Naive thymus-derived CD4-positive, alpha-beta T cell (primary cell): ENCODE measurements at regions of chr10 and their contacts with region 1.

Region 1: GRCh38 chr10:6014241-6014761 is 37.0 kb upstream of the IL15RA start:
- DNase-seq: peak in 7 of 9 donors; percentile 73 to 89 (median 86)
- ATAC-seq: peak; percentile 98
- H3K4me3 ChIP-seq: no peak overlapping the region
- H3K4me3 Mint-ChIP-seq: peak overlapping the region in 9 of 10 donors; percentile 5 to 61 (median 36)
- H3K27ac ChIP-seq: peak overlapping the region; percentile 82
- H3K27ac Mint-ChIP-seq: peak overlapping the region; percentile 85 to 99 (median 96)
- H3K4me1 ChIP-seq: peaks cover 9 to 15% of the 10 kb centered on the region in 2 donors
- H3K4me1 Mint-ChIP-seq: peaks cover 3 to 55% (median 25%) of the 10 kb centered on the region in 7 donors
- H3K27me3 ChIP-seq: no peaks in the 10 kb centered on the region
- H3K27me3 Mint-ChIP-seq: no peaks in the 10 kb centered on the region

Region 2: GRCh38 chr10:6033954-6034353 is 19.7 kb after region 1 on chr10:
- CTCF ChIA-PET with region 1: interaction called, 17 read pairs
- POLR2A ChIA-PET with region 1: interaction called, 7 read pairs
- intact Hi-C with region 1: loop called in 1 of 2 experiments (anchors 2 kb)
- DNase-seq: no peak
- ATAC-seq: no peak
- H3K4me3 ChIP-seq: no peak overlapping the region
- H3K4me3 Mint-ChIP-seq: no peak overlapping the region
- H3K27ac ChIP-seq: no peak overlapping the region
- H3K27ac Mint-ChIP-seq: peak overlapping the region in 2 of 9 donors; percentile 34 to 48
- H3K4me1 ChIP-seq: peaks cover 26 to 32% of the 10 kb centered on the region in 2 donors
- H3K4me1 Mint-ChIP-seq: peaks cover 29 to 60% (median 40%) of the 10 kb centered on the region in 7 donors
- H3K27me3 ChIP-seq: no peaks in the 10 kb centered on the region
- H3K27me3 Mint-ChIP-seq: no peaks in the 10 kb centered on the region

Region 3: GRCh38 chr10:6062101-6062771 is 47.9 kb after region 1 on chr10 and contains the start of gene IL2RA:
- CTCF ChIA-PET with region 1: interaction called, 24 read pairs
- POLR2A ChIA-PET with region 1: interaction called, 5 read pairs
- intact Hi-C with region 1: loop called (anchors 1 kb)
- DNase-seq: peak in 8 of 9 donors; percentile 57 to 79 (median 74)
- ATAC-seq: peak; percentile 92
- H3K4me3 ChIP-seq: peak within 1 kb of the TSS; percentile 54
- H3K4me3 Mint-ChIP-seq: peak within 1 kb of the TSS; percentile 77 to 91 (median 86)
- H3K27ac ChIP-seq: peak within 1 kb of the TSS; percentile 70
- H3K27ac Mint-ChIP-seq: peak within 1 kb of the TSS; percentile 75 to 94 (median 85)
- H3K4me1 ChIP-seq: peaks cover 16 to 27% of the 10 kb centered on the region in 2 donors
- H3K4me1 Mint-ChIP-seq: peaks cover 43 to 82% (median 71%) of the 10 kb centered on the region in 7 donors
- H3K27me3 ChIP-seq: no peaks in the 10 kb centered on the region
- H3K27me3 Mint-ChIP-seq: no peaks in the 10 kb centered on the region
- total RNA-seq, gene IL2RA: 2.5 to 266 (median 6.7) TPM

Region 4: GRCh38 chr10:6068422-6068821 is 54.1 kb after region 1 on chr10:
- CTCF ChIA-PET with region 1: interaction called, 24 read pairs
- POLR2A ChIA-PET with region 1: interaction called, 4 read pairs
- intact Hi-C with region 1: loop called in 1 of 2 experiments (anchors 1 kb)
- DNase-seq: peak in 7 of 9 donors; percentile 65 to 76 (median 69)
- ATAC-seq: peak; percentile 85
- H3K4me3 ChIP-seq: peak overlapping the region; percentile 46
- H3K4me3 Mint-ChIP-seq: peak overlapping the region; percentile 76 to 91 (median 82)
- H3K27ac ChIP-seq: peak overlapping the region; percentile 62
- H3K27ac Mint-ChIP-seq: peak overlapping the region; percentile 16 to 94 (median 90)
- H3K4me1 ChIP-seq: peaks cover 0 to 55% of the 10 kb centered on the region in 2 donors
- H3K4me1 Mint-ChIP-seq: peaks cover 52 to 94% (median 82%) of the 10 kb centered on the region in 7 donors
- H3K27me3 ChIP-seq: no peaks in the 10 kb centered on the region
- H3K27me3 Mint-ChIP-seq: no peaks in the 10 kb centered on the region

Region 5: DNA sequence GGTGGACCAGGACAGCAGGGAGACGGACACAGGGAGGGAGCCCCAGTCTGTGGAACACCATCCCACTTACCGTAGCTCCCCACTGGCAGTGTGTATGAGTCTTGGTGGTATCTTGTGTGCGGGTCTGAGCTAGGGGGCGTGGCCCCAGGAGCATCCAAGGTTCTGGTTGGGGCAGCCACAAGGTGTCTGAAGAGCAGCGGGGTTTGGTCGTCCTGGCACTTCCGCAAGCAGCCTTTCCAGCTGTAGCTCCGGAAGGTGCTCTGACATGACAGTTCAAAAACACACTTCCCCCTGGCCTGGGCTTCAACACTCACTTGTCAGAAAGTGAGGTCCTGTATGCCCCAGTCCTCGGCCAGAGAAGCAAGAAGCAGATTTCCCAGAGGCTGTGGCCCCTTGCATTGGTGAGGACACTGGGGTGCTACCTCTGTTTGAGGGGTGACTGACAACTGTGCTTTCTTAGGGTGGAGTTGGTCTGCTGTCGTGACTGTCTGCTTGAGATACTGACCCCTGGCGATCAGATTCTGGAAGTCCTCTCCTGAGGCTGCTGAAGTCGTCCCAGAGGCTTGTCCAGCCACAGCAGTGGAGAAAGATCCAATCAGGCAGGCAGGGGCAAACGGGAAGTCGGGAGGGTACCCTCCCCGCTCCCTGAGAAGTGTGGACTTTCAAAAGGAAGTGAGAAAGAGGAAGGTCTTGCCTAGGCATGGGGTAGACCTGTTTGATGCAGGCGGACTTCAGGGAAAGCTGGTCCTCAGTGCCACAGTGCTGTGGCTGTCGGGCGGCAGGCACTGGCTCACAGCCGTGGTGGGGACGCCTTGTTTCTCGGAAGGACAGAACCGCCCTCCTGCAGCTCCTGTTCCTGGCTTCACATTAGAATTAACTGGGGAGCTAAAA is 137.0 kb after region 1 on chr10:
- CTCF ChIA-PET with region 1: no interaction called
- POLR2A ChIA-PET with region 1: no interaction called
- intact Hi-C with region 1: loop called in 1 of 2 experiments (anchors 1 kb)
- DNase-seq: peak; percentile 26 to 58 (median 53)
- ATAC-seq: peak; percentile 79
- H3K4me3 ChIP-seq: peak overlapping the region; percentile 28
- H3K4me3 Mint-ChIP-seq: peak overlapping the region; percentile 70 to 85 (median 80)
- H3K27ac ChIP-seq: peak overlapping the region; percentile 25
- H3K27ac Mint-ChIP-seq: peak overlapping the region; percentile 68 to 92 (median 85)
- H3K4me1 ChIP-seq: peaks cover 1 to 32% of the 10 kb centered on the region in 2 donors
- H3K4me1 Mint-ChIP-seq: peaks cover 49 to 68% (median 59%) of the 10 kb centered on the region in 7 donors
- H3K27me3 ChIP-seq: no peaks in the 10 kb centered on the region
- H3K27me3 Mint-ChIP-seq: no peaks in the 10 kb centered on the region

Region 6: DNA sequence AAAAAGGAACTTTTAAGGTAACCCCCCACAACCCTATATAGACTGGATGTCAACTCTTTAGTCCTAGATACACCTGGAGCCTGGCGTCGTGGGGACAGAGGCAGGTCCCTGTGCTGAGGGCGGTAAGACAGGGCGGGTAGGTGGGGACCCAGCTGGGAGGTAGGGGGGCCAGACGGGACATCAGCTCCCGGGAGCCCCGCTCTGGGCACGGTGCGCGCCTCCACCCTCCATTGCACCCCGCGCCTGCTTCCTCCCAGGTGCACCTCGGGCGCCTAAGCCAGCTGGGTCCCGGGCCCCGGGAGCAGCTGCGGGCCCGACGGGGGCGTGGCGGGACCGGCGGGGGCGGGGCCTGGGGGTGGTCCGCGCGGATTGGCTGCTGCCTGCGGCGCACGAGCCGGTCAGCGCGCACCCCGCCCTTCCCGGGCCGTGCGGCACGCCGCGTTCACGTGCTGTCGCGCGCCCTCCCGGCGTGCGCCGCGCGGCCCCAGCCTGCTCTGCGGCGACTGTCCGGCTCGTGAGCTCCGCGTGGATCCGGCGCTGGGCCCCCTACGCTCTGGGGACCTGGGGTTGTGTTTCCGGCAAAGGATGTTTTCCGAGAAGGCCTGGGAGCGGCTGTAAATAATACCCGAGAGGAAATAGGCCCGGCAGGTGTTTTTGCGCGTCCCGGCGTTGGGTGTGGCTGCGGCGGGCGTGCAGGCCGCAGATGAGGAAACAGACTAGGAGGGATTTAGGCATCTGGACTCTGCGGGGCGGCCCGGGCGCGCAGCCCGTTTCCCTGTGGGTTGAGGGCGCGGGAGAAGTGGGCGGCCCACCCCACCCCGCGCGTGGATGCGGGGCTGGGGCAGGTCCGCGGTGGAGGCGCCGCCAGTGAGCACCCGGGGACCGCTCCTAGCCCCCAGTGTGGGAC is 149.3 kb after region 1 on chr10:
- CTCF ChIA-PET with region 1: no interaction called
- POLR2A ChIA-PET with region 1: no interaction called
- intact Hi-C with region 1: no loop called
- DNase-seq: peak; percentile 89 to 95 (median 94)
- ATAC-seq: peak; percentile 96
- H3K4me3 ChIP-seq: peak overlapping the region; percentile 81
- H3K4me3 Mint-ChIP-seq: peak overlapping the region; percentile 85 to 95 (median 92)
- H3K27ac ChIP-seq: peak overlapping the region; percentile 95
- H3K27ac Mint-ChIP-seq: peak overlapping the region; percentile 91 to 99 (median 97)
- H3K4me1 ChIP-seq: peaks cover 25 to 33% of the 10 kb centered on the region in 2 donors
- H3K4me1 Mint-ChIP-seq: peaks cover 30 to 64% (median 57%) of the 10 kb centered on the region in 7 donors
- H3K27me3 ChIP-seq: no peaks in the 10 kb centered on the region
- H3K27me3 Mint-ChIP-seq: no peaks in the 10 kb centered on the region

Region 7: DNA sequence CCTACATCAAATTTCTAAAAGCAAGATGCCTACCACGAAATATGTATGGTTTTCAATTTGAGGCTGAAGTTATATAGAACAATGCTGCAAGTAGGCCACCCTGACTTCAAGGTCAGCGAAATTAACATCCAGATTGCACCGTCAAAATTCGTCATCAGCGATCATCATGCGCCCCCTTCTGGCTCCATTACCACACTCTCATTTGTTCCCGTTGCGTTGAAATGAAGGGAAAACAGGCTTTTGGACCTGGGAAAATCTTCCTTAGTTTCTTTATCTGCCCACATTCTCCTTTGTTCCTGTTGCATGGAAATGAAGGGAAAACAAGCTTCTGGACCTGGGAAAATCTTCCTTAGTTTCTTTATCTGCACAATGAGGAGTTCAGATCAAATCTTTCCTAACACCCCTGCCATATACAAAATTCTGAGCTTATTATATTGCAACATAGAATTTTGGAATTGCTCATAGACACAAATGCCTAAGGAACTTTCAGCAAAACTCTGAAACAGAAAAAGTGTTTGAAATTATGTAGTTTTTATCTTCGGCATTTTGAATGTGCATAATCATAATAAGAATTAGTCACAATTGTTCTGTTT is 664.0 kb after region 1 on chr10:
- CTCF ChIA-PET with region 1: no interaction called
- POLR2A ChIA-PET with region 1: no interaction called
- intact Hi-C with region 1: loop called in 1 of 2 experiments (anchors 1 kb)
- DNase-seq: peak in 8 of 9 donors; percentile 24 to 55 (median 48)
- ATAC-seq: peak; percentile 56
- H3K4me3 ChIP-seq: no peak overlapping the region
- H3K4me3 Mint-ChIP-seq: no peak overlapping the region
- H3K27ac ChIP-seq: no peak overlapping the region
- H3K27ac Mint-ChIP-seq: no peak overlapping the region
- H3K4me1 ChIP-seq: no peaks in the 10 kb centered on the region
- H3K4me1 Mint-ChIP-seq: peaks cover 0 to 12% (median 0%) of the 10 kb centered on the region in 7 donors
- H3K27me3 ChIP-seq: no peaks in the 10 kb centered on the region
- H3K27me3 Mint-ChIP-seq: peaks cover 0 to 66% (median 0%) of the 10 kb centered on the region in 5 donors